ENCODE measurements at regions of chr5 and their contacts with region 1.

Region 1: DNA sequence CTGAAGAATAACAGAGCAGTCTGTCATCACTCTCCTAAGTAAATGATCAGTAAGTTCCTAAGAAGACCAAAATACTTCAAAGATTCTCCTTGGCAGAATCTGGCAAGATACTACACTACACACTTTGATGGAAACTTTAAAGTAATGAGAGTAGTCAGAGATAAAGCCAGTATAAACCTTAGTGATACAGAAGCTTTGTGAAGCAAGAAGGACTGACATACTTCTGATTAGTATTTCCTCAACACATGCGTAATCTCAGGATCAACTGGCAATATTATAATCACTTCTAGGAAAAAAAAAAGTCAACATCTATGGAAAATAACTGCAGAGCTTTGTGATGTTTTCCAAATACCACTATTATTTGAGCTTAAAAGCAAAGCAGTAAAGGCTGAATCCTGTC is 34.0 kb upstream of the ADAMTS19 start:
- DNase-seq: no peak
- H3K4me3 ChIP-seq: no peak overlapping the region
- H3K27ac ChIP-seq: no peak overlapping the region
- H3K4me1 ChIP-seq: no peaks in the 10 kb centered on the region
- H3K27me3 ChIP-seq: no peaks in the 10 kb centered on the region
- CTCF ChIP-seq: no peak
- POLR2A ChIP-seq: no peak

Region 2: GRCh38 chr5:129460936-129461711 is 35.1 kb after region 1 on chr5:
- intact Hi-C with region 1: loop called (anchors 1 kb)
- DNase-seq: no peak
- H3K4me3 ChIP-seq: peak overlapping the region; percentile 51 to 56
- H3K27ac ChIP-seq: peak overlapping the region; percentile 77
- H3K4me1 ChIP-seq: no peaks in the 10 kb centered on the region
- H3K27me3 ChIP-seq: no peaks in the 10 kb centered on the region
- CTCF ChIP-seq: no peak
- POLR2A ChIP-seq: no peak

Region 3: DNA sequence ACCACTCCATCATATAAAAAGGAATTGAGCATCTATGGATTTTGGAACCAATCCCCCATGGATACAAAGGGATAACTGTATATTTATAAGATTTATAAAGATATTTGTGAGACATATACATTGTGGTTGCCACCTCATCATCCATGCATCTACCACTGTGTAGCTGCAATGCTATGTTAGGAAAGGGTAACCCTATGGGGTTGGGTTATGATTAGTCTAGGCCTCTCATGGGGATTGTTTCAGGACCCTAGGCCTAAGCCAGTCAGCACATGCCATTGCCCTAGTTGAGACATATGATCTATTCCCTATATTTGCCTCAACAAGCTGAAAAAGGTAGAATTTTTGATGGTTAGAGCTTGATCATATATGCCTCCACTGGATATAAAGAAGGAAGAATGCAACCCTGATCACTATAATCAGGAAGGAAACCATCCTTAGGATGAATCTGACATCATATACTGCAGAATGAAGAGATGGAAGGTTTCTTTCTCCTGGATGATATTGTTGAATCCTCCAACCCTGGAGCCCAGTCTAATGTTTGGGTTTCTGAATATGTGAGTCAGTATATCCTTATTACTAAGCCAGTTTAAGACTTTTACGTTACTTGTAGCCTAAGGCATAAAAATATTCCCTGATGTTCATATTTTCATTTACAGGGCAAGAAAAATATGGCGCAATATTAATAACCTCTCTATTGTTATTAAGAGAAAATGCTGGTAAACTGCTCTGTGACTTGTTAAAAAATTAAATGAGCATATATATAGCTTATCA is 128.2 kb after region 1 on chr5:
- intact Hi-C with region 1: no loop called
- DNase-seq: no peak
- H3K4me3 ChIP-seq: no peak overlapping the region
- H3K27ac ChIP-seq: no peak overlapping the region
- H3K4me1 ChIP-seq: no peaks in the 10 kb centered on the region
- H3K27me3 ChIP-seq: no peaks in the 10 kb centered on the region
- CTCF ChIP-seq: no peak
- POLR2A ChIP-seq: no peak